ENCODE measurements at regions of chr4 and their contacts with region 1.

Region 1: GRCh38 chr4:1726146-1726934 is 5.0 kb downstream of the TACC3 start:
- DNase-seq: peak; percentile 91
- H3K4me3 ChIP-seq: no peak overlapping the region
- H3K27ac ChIP-seq: no peak overlapping the region
- H3K4me1 ChIP-seq: peaks cover 0 to 13% (median 10%) of the 10 kb centered on the region in 4 donors
- H3K27me3 ChIP-seq: no peaks in the 10 kb centered on the region
- CTCF ChIP-seq: peak; percentile 89 to 96

Region 2: GRCh38 chr4:1693129-1693896 is 33.0 kb before region 1 on chr4:
- intact Hi-C with region 1: loop called (anchors 5 kb)
- DNase-seq: peak; percentile 39 to 77
- H3K4me3 ChIP-seq: no peak overlapping the region
- H3K27ac ChIP-seq: no peak overlapping the region
- H3K4me1 ChIP-seq: no peaks in the 10 kb centered on the region
- H3K27me3 ChIP-seq: no peaks in the 10 kb centered on the region
- CTCF ChIP-seq: peak; percentile 79 to 93